Prostate gland (tissue), 2 donors: ENCODE measurements at regions of chr15 and their contacts with region 1.

Region 1: GRCh38 chr15:52679232-52680040 is at the start of gene ATOSA:
- DNase-seq: peak; percentile 95
- H3K4me3 ChIP-seq: peak within 1 kb of the TSS; percentile 66 to 73
- H3K27ac ChIP-seq: peak within 1 kb of the TSS; percentile 94 to 97
- H3K4me1 ChIP-seq: no peaks in the 10 kb centered on the region
- H3K27me3 ChIP-seq: no peaks in the 10 kb centered on the region
- CTCF ChIP-seq: peak in 2 of 4 experiments; percentile 30 to 37
- POLR2A ChIP-seq: peak; percentile 87
- total RNA-seq, gene ATOSA: 44.3 to 81.6 TPM

Region 2: DNA sequence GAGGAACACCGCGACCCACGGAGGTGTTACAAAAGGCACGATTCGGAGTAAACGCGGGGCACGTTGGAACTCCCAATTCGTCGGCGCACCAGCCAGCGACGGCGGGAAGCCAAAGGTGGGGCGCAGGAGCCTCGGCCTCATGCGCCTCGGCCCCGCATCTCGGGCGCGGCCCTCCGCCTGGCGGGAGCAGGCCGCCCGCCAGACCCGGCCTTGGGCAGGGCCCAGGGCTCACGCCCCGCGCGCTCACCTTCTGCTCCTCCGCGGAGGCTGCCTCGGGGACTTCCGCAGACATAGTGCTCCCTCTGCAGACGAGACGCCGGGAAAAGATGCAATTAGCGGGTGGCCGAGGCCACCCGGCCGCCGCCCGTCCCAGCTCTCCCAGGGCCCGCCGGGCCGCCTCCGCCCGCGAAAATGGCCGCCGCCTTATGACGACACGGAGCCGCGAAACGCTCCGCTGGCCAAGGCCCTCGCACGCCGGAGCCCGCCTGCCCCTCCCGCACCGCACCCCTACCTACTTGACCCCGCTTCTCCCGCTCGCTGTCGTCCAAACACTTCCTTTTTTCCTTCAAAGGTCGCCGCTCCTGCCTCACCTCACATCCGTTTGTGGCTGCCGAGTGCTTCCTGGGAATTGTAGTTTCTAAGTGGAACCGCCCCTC is 110.7 kb before region 1 on chr15 and contains the start of gene ARPP19:
- intact Hi-C with region 1: loop called (anchors 5 kb)
- DNase-seq: peak; percentile 88
- H3K4me3 ChIP-seq: peak within 1 kb of the TSS; percentile 63 to 81
- H3K27ac ChIP-seq: peak within 1 kb of the TSS; percentile 91
- H3K4me1 ChIP-seq: no peaks in the 10 kb centered on the region
- H3K27me3 ChIP-seq: no peaks in the 10 kb centered on the region
- CTCF ChIP-seq: peak in 2 of 4 experiments; percentile 25 to 44
- POLR2A ChIP-seq: peak; percentile 78
- total RNA-seq, gene ARPP19: 86.9 to 130 TPM

Region 3: DNA sequence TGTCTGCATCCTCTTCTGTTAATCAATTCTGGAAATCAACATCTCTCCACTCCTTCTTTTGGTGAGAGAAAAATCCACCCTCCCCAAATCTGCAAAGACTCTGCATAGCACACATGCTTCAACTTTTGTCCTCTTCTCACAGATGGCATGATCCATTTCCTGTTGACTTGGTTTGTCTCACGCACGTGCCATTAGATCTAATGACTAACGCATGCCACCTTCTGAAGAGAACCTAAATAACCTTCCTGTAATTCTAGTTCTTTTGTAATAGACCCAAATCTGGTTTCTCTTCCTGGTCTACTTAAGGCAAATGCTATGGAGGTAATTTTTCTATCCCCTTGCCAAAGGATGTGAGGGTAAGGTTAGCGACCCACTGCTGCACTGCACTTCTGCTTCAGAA is 50.7 kb after region 1 on chr15:
- intact Hi-C with region 1: loop called (anchors 5 kb)
- DNase-seq: no peak
- H3K4me3 ChIP-seq: no peak overlapping the region
- H3K27ac ChIP-seq: no peak overlapping the region
- H3K4me1 ChIP-seq: no peaks in the 10 kb centered on the region
- H3K27me3 ChIP-seq: no peaks in the 10 kb centered on the region
- CTCF ChIP-seq: no peak
- POLR2A ChIP-seq: no peak

Region 4: DNA sequence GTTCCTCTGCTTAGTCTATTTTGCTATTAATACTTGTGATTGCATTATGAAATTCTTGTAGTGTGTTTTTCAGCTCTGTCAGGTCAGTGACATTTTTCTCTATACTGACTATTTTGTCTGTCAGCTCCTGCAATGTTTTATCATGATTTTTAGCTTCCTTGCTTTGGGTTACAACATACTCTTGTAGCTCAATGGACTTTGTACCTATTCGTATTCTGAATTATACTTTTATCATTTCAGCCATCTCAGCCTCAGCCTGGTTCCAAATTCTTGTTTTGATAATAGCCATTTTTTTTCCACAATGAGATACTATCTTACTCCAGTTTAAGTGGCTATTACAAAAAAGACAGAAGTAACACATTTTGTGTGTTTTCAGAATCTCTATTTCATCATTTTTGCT is 314.9 kb after region 1 on chr15:
- intact Hi-C with region 1: no loop called
- DNase-seq: no peak
- H3K4me3 ChIP-seq: no peak overlapping the region
- H3K27ac ChIP-seq: no peak overlapping the region
- H3K4me1 ChIP-seq: no peaks in the 10 kb centered on the region
- H3K27me3 ChIP-seq: no peaks in the 10 kb centered on the region
- CTCF ChIP-seq: no peak
- POLR2A ChIP-seq: no peak